ENCODE measurements at regions of chr5 and their contacts with region 1.

Region 1: GRCh38 chr5:138824924-138825863 is 49.9 kb downstream of the LRRTM2 start:
- DNase-seq: no peak
- ATAC-seq: peak; percentile 77
- H3K4me3 ChIP-seq: no peak overlapping the region
- H3K27ac ChIP-seq: no peak overlapping the region
- H3K4me1 ChIP-seq: no peaks in the 10 kb centered on the region
- H3K27me3 ChIP-seq: no peaks in the 10 kb centered on the region
- CTCF ChIP-seq: peak; percentile 53 to 59 (median 59)
- EP300 ChIP-seq: no peak
- POLR2A ChIP-seq: no peak
- RAD21 ChIP-seq: peak; percentile 51

Region 2: DNA sequence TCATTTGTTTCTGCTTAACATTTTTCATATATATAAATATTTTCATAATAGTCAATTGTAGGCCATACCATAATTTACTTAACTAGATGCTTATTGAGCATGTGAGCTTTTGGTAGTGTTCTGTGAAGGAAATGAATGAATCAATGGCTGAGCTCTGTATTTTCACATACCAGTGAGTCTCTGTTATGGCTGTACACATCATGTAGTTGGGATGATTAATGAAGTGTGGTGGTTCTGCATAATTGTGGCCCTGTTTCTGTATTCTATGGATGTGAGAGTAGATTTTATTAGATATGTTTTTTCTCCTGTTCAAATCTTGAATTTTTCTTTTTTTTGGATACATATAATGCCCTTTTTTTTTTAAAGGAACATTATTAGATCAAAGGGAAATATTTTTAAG is 15.8 kb before region 1 on chr5:
- CTCF ChIA-PET with region 1: interaction called, 25 read pairs
- POLR2A ChIA-PET with region 1: interaction called, 5 read pairs
- RAD21 ChIA-PET with region 1: no interaction called
- SMC1A ChIA-PET with region 1: interaction called, 5 read pairs
- in situ Hi-C with region 1: no loop called
- intact Hi-C with region 1: no loop called
- DNase-seq: no peak
- ATAC-seq: no peak
- H3K4me3 ChIP-seq: no peak overlapping the region
- H3K27ac ChIP-seq: no peak overlapping the region
- H3K4me1 ChIP-seq: no peaks in the 10 kb centered on the region
- H3K27me3 ChIP-seq: no peaks in the 10 kb centered on the region
- CTCF ChIP-seq: no peak
- EP300 ChIP-seq: no peak
- POLR2A ChIP-seq: no peak
- RAD21 ChIP-seq: no peak

Region 3: GRCh38 chr5:138840103-138840502 is 14.9 kb after region 1 on chr5:
- CTCF ChIA-PET with region 1: interaction called, 23 read pairs
- POLR2A ChIA-PET with region 1: no interaction called
- RAD21 ChIA-PET with region 1: no interaction called
- SMC1A ChIA-PET with region 1: interaction called, 4 read pairs
- in situ Hi-C with region 1: no loop called
- intact Hi-C with region 1: no loop called
- DNase-seq: no peak
- ATAC-seq: no peak
- H3K4me3 ChIP-seq: no peak overlapping the region
- H3K27ac ChIP-seq: no peak overlapping the region
- H3K4me1 ChIP-seq: no peaks in the 10 kb centered on the region; the same call in 1 of the 2 replicates
- H3K27me3 ChIP-seq: no peaks in the 10 kb centered on the region
- CTCF ChIP-seq: no peak
- EP300 ChIP-seq: no peak
- POLR2A ChIP-seq: no peak
- RAD21 ChIP-seq: no peak

Region 4: GRCh38 chr5:138849426-138849825 is 24.2 kb after region 1 on chr5:
- CTCF ChIA-PET with region 1: interaction called, 12 read pairs
- POLR2A ChIA-PET with region 1: no interaction called
- RAD21 ChIA-PET with region 1: no interaction called
- SMC1A ChIA-PET with region 1: interaction called, 3 read pairs
- in situ Hi-C with region 1: no loop called
- intact Hi-C with region 1: no loop called
- DNase-seq: no peak
- ATAC-seq: no peak
- H3K4me3 ChIP-seq: no peak overlapping the region
- H3K27ac ChIP-seq: no peak overlapping the region
- H3K4me1 ChIP-seq: no peaks in the 10 kb centered on the region; the same call in 1 of the 2 replicates
- H3K27me3 ChIP-seq: no peaks in the 10 kb centered on the region
- CTCF ChIP-seq: no peak
- EP300 ChIP-seq: no peak
- POLR2A ChIP-seq: no peak
- RAD21 ChIP-seq: no peak

Region 5: GRCh38 chr5:139262742-139263445 is 437.7 kb after region 1 on chr5:
- CTCF ChIA-PET with region 1: interaction called, 10 read pairs
- POLR2A ChIA-PET with region 1: no interaction called
- RAD21 ChIA-PET with region 1: interaction called, 5 read pairs
- SMC1A ChIA-PET with region 1: interaction called, 13 read pairs
- in situ Hi-C with region 1: no loop called
- intact Hi-C with region 1: loop called (anchors 5 kb)
- DNase-seq: peak; percentile 40
- ATAC-seq: peak; percentile 99
- H3K4me3 ChIP-seq: no peak overlapping the region
- H3K27ac ChIP-seq: no peak overlapping the region
- H3K4me1 ChIP-seq: peaks cover 5% of the 10 kb centered on the region
- H3K27me3 ChIP-seq: no peaks in the 10 kb centered on the region; a peak in 1 of 4 replicates
- CTCF ChIP-seq: peak; percentile 83 to 93 (median 85)
- EP300 ChIP-seq: no peak
- POLR2A ChIP-seq: no peak
- RAD21 ChIP-seq: peak; percentile 99